Ascending aorta (tissue), 2 donors: ENCODE measurements at regions of chr20 and their contacts with region 1.

Region 1: DNA sequence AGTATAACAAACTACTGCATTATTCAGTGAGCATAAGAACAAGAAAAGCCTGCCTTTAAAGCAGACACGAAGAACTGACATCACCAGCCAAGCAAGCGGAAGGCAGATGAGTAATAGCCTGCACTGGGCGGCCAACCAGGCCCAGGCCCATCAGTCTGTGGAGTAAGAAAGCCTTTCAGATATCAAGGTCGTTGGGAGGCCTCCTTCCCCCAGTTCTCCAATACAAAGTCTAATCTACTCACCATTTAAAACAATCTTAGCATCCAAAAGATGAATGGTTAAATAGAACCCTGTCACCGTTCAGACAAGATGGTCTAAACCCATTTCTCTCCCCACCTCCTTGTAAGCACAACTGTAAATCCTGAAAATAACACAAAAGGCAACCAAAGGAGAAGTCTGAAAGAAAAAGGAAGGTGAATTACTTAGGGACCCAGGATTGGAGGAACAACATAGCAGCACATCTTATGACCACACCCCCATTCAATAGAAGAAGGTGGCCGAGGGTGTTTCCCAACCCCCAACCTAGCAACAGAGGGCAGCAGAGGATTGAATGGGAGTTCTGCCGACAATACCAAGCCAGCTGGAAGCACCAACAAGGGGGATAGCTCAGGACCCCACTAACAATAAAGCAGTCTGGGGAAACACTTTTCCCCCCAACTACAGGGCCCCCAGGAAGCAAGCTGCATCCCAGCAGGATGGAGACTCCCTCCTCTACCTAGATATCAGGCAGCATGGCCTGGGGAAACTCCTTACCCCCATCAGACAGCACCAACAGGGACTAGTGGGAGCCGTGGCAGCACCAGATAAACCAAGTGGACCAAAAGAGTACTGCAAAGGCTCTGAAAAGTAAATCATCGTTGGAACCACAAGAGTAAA is 67.9 kb downstream of the ZHX3 start:
- DNase-seq: peak; percentile 46 to 93
- H3K4me3 ChIP-seq: no peak overlapping the region
- H3K27ac ChIP-seq: peak overlapping the region; percentile 99
- H3K4me1 ChIP-seq: peaks cover 33 to 63% of the 10 kb centered on the region in 2 donors
- H3K27me3 ChIP-seq: no peaks in the 10 kb centered on the region
- CTCF ChIP-seq: peak in 2 of 3 experiments; percentile 2 to 22

Region 2: GRCh38 chr20:40913224-40914185 is 336.1 kb before region 1 on chr20:
- intact Hi-C with region 1: no loop called
- DNase-seq: no peak
- H3K4me3 ChIP-seq: no peak overlapping the region
- H3K27ac ChIP-seq: no peak overlapping the region
- H3K4me1 ChIP-seq: no peaks in the 10 kb centered on the region
- H3K27me3 ChIP-seq: no peaks in the 10 kb centered on the region
- CTCF ChIP-seq: no peak

Region 3: DNA sequence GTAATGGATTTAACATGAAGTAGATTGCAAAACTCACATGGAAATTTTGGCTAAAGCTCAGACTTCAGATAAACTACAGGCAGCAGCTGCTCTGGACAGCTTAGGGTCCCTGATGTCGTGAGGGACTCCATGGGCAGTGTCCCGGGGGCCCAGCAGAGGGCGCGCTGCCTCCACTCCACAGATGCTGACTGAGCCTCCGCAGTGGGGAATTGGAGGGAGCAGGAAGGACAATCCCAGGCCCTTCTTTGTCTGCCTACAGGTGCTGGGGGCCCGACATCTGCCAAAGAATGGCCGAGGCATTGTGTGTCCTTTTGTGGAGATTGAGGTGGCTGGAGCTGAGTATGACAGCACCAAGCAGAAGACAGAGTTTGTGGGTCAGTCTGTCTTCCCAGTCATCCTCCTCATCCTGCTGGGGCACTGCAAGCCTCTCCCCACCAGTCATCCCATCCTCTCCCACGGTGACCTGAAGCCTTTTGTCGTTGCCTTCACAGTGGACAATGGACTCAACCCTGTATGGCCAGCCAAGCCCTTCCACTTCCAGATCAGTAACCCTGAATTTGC is 76.4 kb before region 1 on chr20:
- intact Hi-C with region 1: loop called (anchors 1 kb)
- DNase-seq: peak; percentile 40 to 91
- H3K4me3 ChIP-seq: no peak overlapping the region
- H3K27ac ChIP-seq: peak overlapping the region; percentile 82 to 83
- H3K4me1 ChIP-seq: peaks cover 8 to 54% of the 10 kb centered on the region in 2 donors
- H3K27me3 ChIP-seq: no peaks in the 10 kb centered on the region
- CTCF ChIP-seq: peak; percentile 86 to 96 (median 90)

Region 4: DNA sequence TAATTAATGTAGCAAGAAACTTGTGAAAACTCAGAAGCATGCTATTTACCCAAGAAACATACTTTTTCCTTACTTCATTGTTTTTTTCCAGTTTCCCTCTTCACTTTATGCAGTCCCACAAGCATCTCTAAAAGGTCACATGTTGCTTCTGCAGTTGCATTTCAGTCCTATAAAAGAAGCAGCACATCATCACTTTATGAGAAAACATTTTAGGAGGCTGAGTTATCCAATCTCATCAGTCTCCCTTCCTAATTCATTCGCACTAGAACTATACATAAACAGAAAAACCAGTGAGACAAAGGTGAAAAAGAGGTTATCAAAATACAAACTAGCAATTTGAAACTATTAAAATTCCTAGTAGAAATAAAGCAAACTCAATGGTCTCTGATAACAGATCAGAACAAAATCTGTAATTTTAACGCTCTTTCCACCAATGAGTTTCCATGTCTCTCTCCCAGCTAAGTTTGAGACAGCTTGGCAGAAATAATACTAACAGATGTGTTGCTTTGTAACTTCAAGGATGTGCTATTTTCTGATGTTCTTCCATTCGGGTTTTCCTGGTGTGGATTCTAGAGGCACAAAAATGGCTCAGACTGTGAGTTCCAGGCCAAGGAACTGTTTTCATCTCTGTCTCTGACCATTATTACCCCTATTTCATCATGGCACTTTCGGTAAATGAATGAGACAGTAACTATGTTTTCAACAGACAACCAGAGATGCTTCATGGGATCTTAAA is 19.4 kb after region 1 on chr20:
- intact Hi-C with region 1: loop called (anchors 2 kb)
- DNase-seq: no peak
- H3K4me3 ChIP-seq: no peak overlapping the region
- H3K27ac ChIP-seq: peak overlapping the region; percentile 7 to 8
- H3K4me1 ChIP-seq: peaks cover 0 to 6% of the 10 kb centered on the region in 2 donors
- H3K27me3 ChIP-seq: no peaks in the 10 kb centered on the region
- CTCF ChIP-seq: no peak

Region 5: GRCh38 chr20:41317536-41318270 is 68.1 kb after region 1 on chr20 and contains the start of gene ZHX3:
- intact Hi-C with region 1: loop called (anchors 1 kb)
- DNase-seq: peak; percentile 85 to 98
- H3K4me3 ChIP-seq: peak within 1 kb of the TSS; percentile 94
- H3K27ac ChIP-seq: peak within 1 kb of the TSS; percentile 87 to 90
- H3K4me1 ChIP-seq: peaks cover 0 to 22% of the 10 kb centered on the region in 2 donors
- H3K27me3 ChIP-seq: no peaks in the 10 kb centered on the region
- CTCF ChIP-seq: no peak
- total RNA-seq, gene ZHX3: 53.3 TPM

Region 6: DNA sequence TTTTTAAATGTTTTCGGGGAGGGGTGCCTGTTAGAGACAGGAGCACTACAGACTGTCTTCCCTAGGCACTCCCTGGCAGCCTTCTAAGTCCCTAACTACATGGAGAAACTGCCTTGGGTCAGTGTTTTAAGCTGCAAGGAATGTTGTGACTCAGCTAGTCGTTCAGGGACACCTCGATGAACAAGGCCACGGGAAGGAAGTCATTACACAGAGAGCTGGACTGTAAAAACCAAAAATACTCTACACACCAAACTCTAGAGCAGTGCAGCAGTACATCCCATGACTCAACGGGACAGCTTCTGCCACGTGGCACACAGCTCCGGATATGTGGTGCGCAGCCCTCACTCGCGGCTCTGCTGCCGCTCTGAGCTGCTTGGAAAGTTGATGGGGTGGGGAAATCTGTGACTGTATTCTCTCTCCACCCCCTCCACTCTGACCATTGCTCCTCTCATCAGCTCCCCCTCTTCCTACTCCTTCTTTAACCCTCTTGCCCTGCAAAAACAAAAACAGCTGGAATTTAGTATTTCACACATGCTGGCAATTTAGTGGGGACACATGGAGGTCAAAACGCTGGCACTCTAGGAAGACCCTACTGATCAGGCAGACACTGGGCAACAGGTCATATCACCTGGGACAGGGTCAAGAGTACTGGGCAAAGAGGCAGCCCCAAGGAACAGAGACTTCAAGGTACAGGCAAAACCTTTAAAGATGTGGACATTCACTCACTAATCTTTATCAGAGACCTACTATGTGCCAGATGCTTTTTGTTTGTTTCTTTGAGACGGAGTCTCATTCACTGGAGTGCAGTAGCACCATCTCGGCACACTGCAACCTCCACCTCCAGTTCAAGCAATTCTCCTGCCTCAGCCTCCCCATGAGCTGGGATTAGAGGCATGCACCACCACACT is 80.0 kb after region 1 on chr20:
- intact Hi-C with region 1: loop called (anchors 1 kb)
- DNase-seq: peak; percentile 80 to 96
- H3K4me3 ChIP-seq: peak overlapping the region in 1 of 2 donors; percentile 44
- H3K27ac ChIP-seq: peak overlapping the region; percentile 89 to 95
- H3K4me1 ChIP-seq: peaks cover 9 to 14% of the 10 kb centered on the region in 2 donors
- H3K27me3 ChIP-seq: no peaks in the 10 kb centered on the region
- CTCF ChIP-seq: no peak

Region 7: GRCh38 chr20:41339507-41340326 is 90.1 kb after region 1 on chr20:
- intact Hi-C with region 1: loop called (anchors 1 kb)
- DNase-seq: peak in 1 of 2 donors; percentile 91
- H3K4me3 ChIP-seq: peak overlapping the region; percentile 48 to 55
- H3K27ac ChIP-seq: peak overlapping the region; percentile 81 to 82
- H3K4me1 ChIP-seq: peaks cover 4 to 9% of the 10 kb centered on the region in 2 donors
- H3K27me3 ChIP-seq: no peaks in the 10 kb centered on the region
- CTCF ChIP-seq: peak; percentile 98 to 99 (median 99)